WTC11 (cell line): ENCODE measurements at regions of chr10 and their contacts with region 1.

Region 1: GRCh38 chr10:97553575-97554031 is 19.0 kb upstream of the ANKRD2 start:
- DNase-seq: peak; percentile 81
- ATAC-seq: peak; percentile 91
- H3K4me3 Mint-ChIP-seq: peak overlapping the region; percentile 25; the same call in 1 of the 2 replicates
- H3K27ac Mint-ChIP-seq: peak overlapping the region; percentile 96
- H3K4me1 Mint-ChIP-seq: peaks cover 37% of the 10 kb centered on the region
- H3K27me3 Mint-ChIP-seq: no peaks in the 10 kb centered on the region
- CTCF ChIP-seq: no peak

Region 2: DNA sequence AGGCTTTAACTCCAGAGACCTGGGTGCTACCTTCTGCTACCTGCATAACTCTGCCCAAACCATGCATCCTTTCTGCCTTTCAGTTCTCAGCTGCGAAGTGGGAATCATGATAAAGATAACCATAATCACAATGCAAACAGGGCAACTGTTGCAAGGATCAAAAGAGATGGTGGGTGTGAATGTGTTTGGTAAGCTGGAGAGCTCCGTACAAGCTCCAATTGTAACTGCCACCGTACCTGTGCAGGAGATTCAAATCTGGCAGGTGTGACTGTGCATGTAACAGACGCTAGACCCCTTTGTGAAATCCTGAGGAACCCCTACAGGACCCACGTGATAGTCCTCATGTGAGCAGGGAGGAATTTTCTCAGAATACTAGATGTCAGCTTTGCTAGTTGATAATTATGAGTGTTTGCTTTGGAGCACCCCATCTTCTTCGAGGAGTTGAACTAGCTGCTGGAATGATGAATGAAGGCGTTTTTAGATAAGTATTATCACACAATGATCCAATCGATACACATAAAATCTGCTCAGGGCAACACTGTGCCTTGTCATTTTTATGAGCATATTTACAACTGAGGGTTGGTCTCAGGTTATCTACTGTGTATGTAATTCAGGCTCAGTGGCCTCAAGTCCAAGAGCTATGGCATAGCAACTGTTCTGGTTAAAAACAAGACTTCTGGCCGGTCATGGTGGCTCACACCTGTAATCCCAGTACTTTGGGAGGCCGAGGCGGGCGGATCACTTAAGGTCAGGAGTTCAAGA is 203.7 kb before region 1 on chr10:
- CTCF ChIA-PET with region 1: no interaction called
- POLR2A ChIA-PET with region 1: no interaction called
- DNase-seq: no peak
- ATAC-seq: no peak
- H3K4me3 Mint-ChIP-seq: no peak overlapping the region
- H3K27ac Mint-ChIP-seq: no peak overlapping the region; the same call in 1 of the 2 replicates
- H3K4me1 Mint-ChIP-seq: peaks cover 4% of the 10 kb centered on the region; the same call in 1 of the 2 replicates
- H3K27me3 Mint-ChIP-seq: no peaks in the 10 kb centered on the region
- CTCF ChIP-seq: no peak

Region 3: DNA sequence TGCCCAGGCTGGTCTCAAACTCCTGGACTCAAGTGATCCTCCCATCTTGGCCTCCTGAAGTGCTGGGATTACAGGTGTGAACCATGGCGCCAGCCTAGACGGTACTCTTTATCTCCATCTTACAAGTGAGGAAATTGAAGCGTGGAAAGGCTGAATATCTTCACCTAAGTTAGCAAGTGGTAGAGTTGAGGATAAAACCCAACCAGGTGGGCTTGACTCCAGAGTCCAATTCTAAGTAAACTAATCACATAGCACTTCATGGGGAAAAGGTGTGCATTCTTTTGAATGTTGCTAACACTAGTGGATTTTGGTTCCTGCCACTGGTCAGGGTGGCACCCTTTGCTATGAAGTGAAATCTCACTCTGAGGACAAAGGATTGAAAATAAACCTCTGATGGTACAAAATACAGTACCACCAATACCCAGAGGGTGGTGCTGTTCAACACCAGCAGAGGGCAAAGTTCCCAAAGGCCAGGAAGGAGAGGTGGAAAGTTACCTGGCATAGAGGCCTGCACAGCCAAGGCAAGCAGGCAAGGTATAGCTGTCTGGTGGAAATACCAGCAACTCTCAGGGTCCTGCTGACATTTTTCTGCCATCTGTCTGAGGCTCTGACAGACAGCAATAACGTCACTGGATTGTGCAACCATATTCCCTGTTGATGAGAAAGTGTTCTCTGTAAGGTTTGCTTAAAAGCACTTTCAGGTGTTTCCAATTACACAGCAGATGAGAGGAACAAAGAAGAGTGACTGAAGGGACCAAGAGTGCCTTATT is 90.1 kb before region 1 on chr10:
- CTCF ChIA-PET with region 1: interaction called, 14 read pairs
- POLR2A ChIA-PET with region 1: no interaction called
- DNase-seq: peak; percentile 52
- ATAC-seq: peak; percentile 91
- H3K4me3 Mint-ChIP-seq: no peak overlapping the region
- H3K27ac Mint-ChIP-seq: peak overlapping the region; percentile 60
- H3K4me1 Mint-ChIP-seq: no peaks in the 10 kb centered on the region
- H3K27me3 Mint-ChIP-seq: no peaks in the 10 kb centered on the region
- CTCF ChIP-seq: peak; percentile 79

Region 4: GRCh38 chr10:97518301-97519043 is 35.1 kb before region 1 on chr10:
- CTCF ChIA-PET with region 1: interaction called, 10 read pairs
- POLR2A ChIA-PET with region 1: interaction called, 3 read pairs
- DNase-seq: no peak
- ATAC-seq: peak; percentile 56
- H3K4me3 Mint-ChIP-seq: no peak overlapping the region
- H3K27ac Mint-ChIP-seq: peak overlapping the region; percentile 55; the same call in 1 of the 2 replicates
- H3K4me1 Mint-ChIP-seq: peaks cover 43% of the 10 kb centered on the region
- H3K27me3 Mint-ChIP-seq: no peaks in the 10 kb centered on the region; the same call in 1 of the 2 replicates
- CTCF ChIP-seq: no peak

Region 5: DNA sequence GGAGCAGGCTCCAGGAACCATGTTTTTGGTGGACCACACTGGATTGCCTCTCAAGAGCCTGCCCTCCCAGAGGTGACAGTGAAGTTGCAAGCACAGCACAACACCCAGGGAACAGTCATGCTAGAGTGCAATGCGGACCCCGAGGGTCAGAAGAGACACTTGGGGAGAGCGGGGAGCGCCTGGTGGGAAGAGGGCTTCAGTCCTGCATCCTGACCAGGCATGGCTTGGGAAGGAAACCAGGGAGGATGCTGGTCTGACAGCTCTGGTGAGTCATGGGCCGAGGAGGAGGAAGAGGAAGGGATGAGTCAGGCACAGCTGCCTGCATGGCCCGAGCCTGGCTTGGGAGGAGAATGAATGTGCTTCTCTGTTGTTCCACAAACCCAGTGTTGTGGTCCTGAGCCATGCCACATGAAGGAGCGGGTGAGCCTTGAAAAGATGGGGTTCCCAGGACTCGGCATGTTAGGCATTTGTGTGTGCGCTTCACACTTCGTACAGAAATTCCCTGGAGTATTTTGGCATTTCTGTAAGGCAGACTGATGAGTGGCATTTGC is 10.5 kb before region 1 on chr10:
- CTCF ChIA-PET with region 1: interaction called, 44 read pairs
- POLR2A ChIA-PET with region 1: no interaction called
- DNase-seq: no peak
- ATAC-seq: no peak
- H3K4me3 Mint-ChIP-seq: no peak overlapping the region
- H3K27ac Mint-ChIP-seq: peak overlapping the region; percentile 5
- H3K4me1 Mint-ChIP-seq: peaks cover 32% of the 10 kb centered on the region
- H3K27me3 Mint-ChIP-seq: no peaks in the 10 kb centered on the region
- CTCF ChIP-seq: no peak

Region 6: DNA sequence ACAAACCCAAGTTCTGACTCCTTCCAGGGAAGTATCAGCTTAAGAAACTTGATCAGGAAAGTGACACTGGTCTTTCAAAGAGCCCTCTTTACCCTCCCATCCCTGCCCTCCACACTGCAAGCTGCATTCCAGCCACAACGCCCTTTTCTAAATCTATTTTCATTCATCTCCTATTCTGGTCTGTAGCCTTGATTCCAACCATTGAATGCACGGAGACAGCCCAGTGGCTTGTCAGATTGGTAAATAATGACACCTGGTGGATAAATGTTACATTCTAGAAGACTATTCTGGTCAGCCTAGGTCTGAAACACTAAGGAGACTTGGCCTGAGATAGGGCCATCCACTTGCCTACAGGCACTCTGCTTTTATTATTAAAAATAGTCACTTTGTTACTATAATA is 58.8 kb after region 1 on chr10:
- CTCF ChIA-PET with region 1: interaction called, 23 read pairs
- POLR2A ChIA-PET with region 1: no interaction called
- DNase-seq: no peak
- ATAC-seq: peak; percentile 86
- H3K4me3 Mint-ChIP-seq: no peak overlapping the region
- H3K27ac Mint-ChIP-seq: no peak overlapping the region; the same call in 1 of the 2 replicates
- H3K4me1 Mint-ChIP-seq: peaks cover 14% of the 10 kb centered on the region
- H3K27me3 Mint-ChIP-seq: no peaks in the 10 kb centered on the region
- CTCF ChIP-seq: no peak

Region 7: DNA sequence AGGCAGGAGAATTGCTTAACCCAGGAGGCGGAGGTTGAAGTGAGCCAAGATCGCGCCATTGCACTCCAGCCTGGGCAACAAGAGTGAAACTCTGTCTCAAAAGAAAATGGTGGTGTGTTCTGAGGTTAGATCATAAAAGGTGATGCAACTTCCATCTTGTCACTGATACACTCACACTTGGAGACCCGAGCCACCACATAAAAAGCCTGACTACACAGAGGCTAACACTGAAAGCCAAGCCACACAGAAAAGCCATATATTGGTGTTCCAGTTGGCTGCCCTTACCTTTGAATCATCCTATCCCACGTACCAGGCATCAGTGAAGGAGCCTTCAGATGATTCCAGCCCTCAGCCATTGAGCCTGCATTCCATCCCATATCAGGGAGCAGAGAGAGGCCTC is 75.7 kb after region 1 on chr10:
- CTCF ChIA-PET with region 1: no interaction called
- POLR2A ChIA-PET with region 1: no interaction called
- DNase-seq: no peak
- ATAC-seq: no peak
- H3K4me3 Mint-ChIP-seq: no peak overlapping the region
- H3K27ac Mint-ChIP-seq: no peak overlapping the region
- H3K4me1 Mint-ChIP-seq: peaks cover 11% of the 10 kb centered on the region; the same call in 1 of the 2 replicates
- H3K27me3 Mint-ChIP-seq: no peaks in the 10 kb centered on the region
- CTCF ChIP-seq: no peak